Heart left ventricle (tissue), 16 donors: ENCODE measurements at regions of chr11 and their contacts with region 1.

Region 1: DNA sequence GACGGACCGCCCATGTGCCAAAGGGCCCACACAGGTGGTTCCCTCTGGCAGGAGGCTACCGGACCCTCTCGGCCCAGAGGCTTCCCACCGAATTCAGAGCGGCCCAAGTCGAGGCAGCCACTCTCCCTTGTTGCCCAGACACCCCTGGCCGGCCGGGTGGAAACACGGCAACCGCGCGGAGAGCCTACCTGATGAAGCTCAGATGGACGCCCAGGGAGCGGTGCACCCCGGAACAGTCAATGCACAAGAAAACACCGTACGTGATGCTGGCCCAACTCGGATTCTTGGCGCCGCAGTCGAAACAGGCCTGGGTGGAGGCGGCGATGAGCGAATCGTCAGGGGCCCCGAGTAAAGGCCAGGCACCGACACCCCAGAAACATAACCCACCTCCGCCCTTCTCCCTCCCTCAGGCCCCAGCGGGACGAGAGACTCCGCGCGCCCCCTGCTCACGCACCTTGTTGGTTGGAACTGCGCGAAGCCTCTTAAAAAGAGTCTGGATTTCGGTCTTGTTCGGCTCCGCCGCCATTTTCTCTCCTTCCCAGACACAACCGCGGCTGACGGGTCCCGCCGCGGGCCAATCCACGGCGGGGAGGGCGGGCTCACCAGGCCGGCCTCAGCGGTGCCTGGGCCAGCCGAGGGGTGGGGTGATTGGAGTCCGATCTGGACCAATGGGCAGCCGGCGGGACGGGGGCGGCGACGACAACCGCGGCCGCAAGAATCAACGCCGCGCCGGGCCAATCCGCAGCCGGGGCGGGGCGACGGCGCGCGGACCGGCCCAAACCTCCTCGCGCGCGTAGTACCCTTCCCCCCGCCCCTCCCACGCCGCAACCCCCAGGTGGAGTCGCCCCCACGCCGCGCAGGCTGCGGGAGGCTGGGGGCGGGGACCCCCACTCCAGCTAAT is at the start of gene ARFGAP2:
- DNase-seq: peak; percentile 98
- ATAC-seq: peak; percentile 86 to 94 (median 91)
- H3K4me3 ChIP-seq: peak within 1 kb of the TSS; percentile 67 to 100 (median 94)
- H3K27ac ChIP-seq: peak within 1 kb of the TSS; percentile 92 to 100 (median 98)
- H3K4me1 ChIP-seq: peaks cover 11 to 89% (median 60%) of the 10 kb centered on the region in 12 donors
- H3K27me3 ChIP-seq: no peaks in the 10 kb centered on the region
- CTCF ChIP-seq: no peak
- POLR2A ChIP-seq: peak in 1 of 2 donors; percentile 69
- total RNA-seq, gene ARFGAP2: 47.5 to 96.1 (median 61.3) TPM

Region 2: GRCh38 chr11:46278387-46279125 is 898.0 kb before region 1 on chr11:
- intact Hi-C with region 1: no loop called
- DNase-seq: peak in 4 of 5 donors; percentile 56 to 73 (median 61)
- ATAC-seq: peak in 3 of 4 donors; percentile 27 to 50 (median 43)
- H3K4me3 ChIP-seq: peak overlapping the region; percentile 48 to 87 (median 72)
- H3K27ac ChIP-seq: peak overlapping the region; percentile 60 to 89 (median 80)
- H3K4me1 ChIP-seq: peaks cover 7 to 84% (median 58%) of the 10 kb centered on the region in 12 donors
- H3K27me3 ChIP-seq: peaks cover 0 to 24% (median 0%) of the 10 kb centered on the region in 9 donors
- CTCF ChIP-seq: peak; percentile 32 to 75 (median 56)
- POLR2A ChIP-seq: no peak

Region 3: GRCh38 chr11:47078751-47079521 is 97.6 kb before region 1 on chr11:
- intact Hi-C with region 1: no loop called
- DNase-seq: no peak
- ATAC-seq: no peak
- H3K4me3 ChIP-seq: no peak overlapping the region
- H3K27ac ChIP-seq: no peak overlapping the region
- H3K4me1 ChIP-seq: peaks cover 0 to 4% (median 0%) of the 10 kb centered on the region in 12 donors
- H3K27me3 ChIP-seq: no peaks in the 10 kb centered on the region
- CTCF ChIP-seq: no peak
- POLR2A ChIP-seq: no peak

Region 4: GRCh38 chr11:47213985-47214564 is 37.5 kb after region 1 on chr11:
- intact Hi-C with region 1: loop called in 5 of 10 experiments (anchors 1 to 5 kb)
- DNase-seq: peak; percentile 92 to 97 (median 96)
- ATAC-seq: peak; percentile 90 to 95 (median 94)
- H3K4me3 ChIP-seq: peak overlapping the region; percentile 9 to 81 (median 68)
- H3K27ac ChIP-seq: peak overlapping the region; percentile 81 to 97 (median 94)
- H3K4me1 ChIP-seq: peaks cover 0 to 39% (median 20%) of the 10 kb centered on the region in 12 donors
- H3K27me3 ChIP-seq: no peaks in the 10 kb centered on the region
- CTCF ChIP-seq: no peak
- POLR2A ChIP-seq: peak in 1 of 2 donors; percentile 80

Region 5: GRCh38 chr11:47248664-47249377 is 72.2 kb after region 1 on chr11 and contains the start of gene ACP2:
- intact Hi-C with region 1: loop called in 1 of 10 experiments (anchors 1 kb)
- DNase-seq: peak; percentile 88 to 94 (median 89)
- ATAC-seq: peak; percentile 88 to 97 (median 96)
- H3K4me3 ChIP-seq: peak within 1 kb of the TSS; percentile 59 to 93 (median 78)
- H3K27ac ChIP-seq: peak within 1 kb of the TSS; percentile 77 to 94 (median 90)
- H3K4me1 ChIP-seq: peaks cover 2 to 51% (median 24%) of the 10 kb centered on the region in 12 donors
- H3K27me3 ChIP-seq: no peaks in the 10 kb centered on the region
- CTCF ChIP-seq: peak in 3 of 12 donors; percentile 24 to 33 (median 32)
- POLR2A ChIP-seq: peak in 1 of 2 donors; percentile 46
- total RNA-seq, gene ACP2: 18.0 to 60.4 (median 26.6) TPM

Region 6: GRCh38 chr11:47259178-47259977 is 82.8 kb after region 1 on chr11:
- intact Hi-C with region 1: loop called in 8 of 10 experiments (anchors 2 to 5 kb)
- DNase-seq: peak in 2 of 5 donors; percentile 54 to 55
- ATAC-seq: peak; percentile 22 to 57 (median 46)
- H3K4me3 ChIP-seq: peak overlapping the region in 6 of 12 donors; percentile 43 to 57 (median 50)
- H3K27ac ChIP-seq: peak overlapping the region in 10 of 12 donors; percentile 9 to 90 (median 82)
- H3K4me1 ChIP-seq: peaks cover 9 to 62% (median 46%) of the 10 kb centered on the region in 12 donors
- H3K27me3 ChIP-seq: no peaks in the 10 kb centered on the region
- CTCF ChIP-seq: peak; percentile 58 to 82 (median 69)
- POLR2A ChIP-seq: no peak

Region 7: DNA sequence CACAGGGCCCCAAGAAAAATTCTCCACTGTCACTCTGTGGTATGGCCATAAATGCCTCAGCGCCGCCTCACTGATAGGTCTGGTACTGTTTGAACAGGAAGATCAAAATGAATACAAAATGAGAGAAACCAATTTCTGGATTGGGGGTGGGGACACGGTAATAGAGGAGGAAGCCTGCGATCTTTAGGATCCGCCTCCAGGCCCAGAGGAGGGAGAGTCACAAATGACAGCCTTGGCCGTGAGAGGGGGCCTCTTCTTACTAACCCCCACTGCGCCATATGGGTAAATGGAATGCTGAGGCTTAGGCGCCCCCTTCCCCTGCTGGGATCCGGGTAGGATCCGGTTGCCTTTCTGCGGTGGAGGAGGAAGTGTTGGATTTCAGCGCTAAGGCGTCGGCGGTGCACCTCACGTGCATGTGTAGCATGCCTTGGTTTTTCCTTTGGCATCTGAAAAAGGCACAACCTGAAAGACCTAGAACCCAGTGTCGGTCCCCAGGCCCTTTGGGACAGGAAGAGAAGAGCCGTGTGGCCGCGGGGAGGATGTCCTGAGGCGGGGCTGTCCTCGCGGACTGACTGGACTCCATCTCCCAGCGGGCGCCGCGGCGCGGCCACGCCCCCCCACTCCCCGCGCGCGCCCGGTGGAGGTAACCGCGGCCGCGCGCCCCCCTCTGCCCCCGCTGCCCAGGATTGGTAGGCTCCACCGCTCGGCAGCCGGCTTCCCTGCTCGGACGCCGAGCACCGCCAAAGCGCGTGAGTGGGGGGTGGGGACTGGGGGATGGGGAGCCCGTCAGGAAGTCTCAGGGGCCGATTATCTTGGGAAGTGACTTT is 92.6 kb after region 1 on chr11:
- intact Hi-C with region 1: loop called in 2 of 10 experiments (anchors 5 to 10 kb)
- DNase-seq: peak; percentile 91 to 95 (median 94)
- ATAC-seq: peak; percentile 70 to 92 (median 90)
- H3K4me3 ChIP-seq: peak overlapping the region; percentile 44 to 95 (median 84)
- H3K27ac ChIP-seq: peak overlapping the region; percentile 92 to 99 (median 98)
- H3K4me1 ChIP-seq: peaks cover 0 to 58% (median 40%) of the 10 kb centered on the region in 12 donors
- H3K27me3 ChIP-seq: no peaks in the 10 kb centered on the region
- CTCF ChIP-seq: peak in 3 of 12 donors; percentile 18 to 32 (median 31)
- POLR2A ChIP-seq: peak in 1 of 2 donors; percentile 0

Region 8: GRCh38 chr11:47426061-47426956 is 249.7 kb after region 1 on chr11 and contains the start of gene PSMC3:
- intact Hi-C with region 1: loop called in 1 of 10 experiments (anchors 10 kb)
- DNase-seq: peak; percentile 98 to 99 (median 99)
- ATAC-seq: peak; percentile 95 to 99 (median 97)
- H3K4me3 ChIP-seq: peak within 1 kb of the TSS; percentile 69 to 97 (median 84)
- H3K27ac ChIP-seq: peak within 1 kb of the TSS; percentile 81 to 96 (median 92)
- H3K4me1 ChIP-seq: peaks cover 5 to 25% (median 14%) of the 10 kb centered on the region in 12 donors
- H3K27me3 ChIP-seq: no peaks in the 10 kb centered on the region
- CTCF ChIP-seq: peak in 1 of 12 donors; percentile 5
- POLR2A ChIP-seq: peak in 1 of 2 donors; percentile 55
- total RNA-seq, gene PSMC3: 121 to 215 (median 151) TPM